ENCODE measurements at regions of chr16 and their contacts with region 1.

Region 1: GRCh38 chr16:2339521-2340484 is 725 bp downstream of the ABCA3 start:
- DNase-seq: no peak
- H3K4me3 ChIP-seq: peak overlapping the region; percentile 47
- CTCF ChIP-seq: no peak

Region 2: DNA sequence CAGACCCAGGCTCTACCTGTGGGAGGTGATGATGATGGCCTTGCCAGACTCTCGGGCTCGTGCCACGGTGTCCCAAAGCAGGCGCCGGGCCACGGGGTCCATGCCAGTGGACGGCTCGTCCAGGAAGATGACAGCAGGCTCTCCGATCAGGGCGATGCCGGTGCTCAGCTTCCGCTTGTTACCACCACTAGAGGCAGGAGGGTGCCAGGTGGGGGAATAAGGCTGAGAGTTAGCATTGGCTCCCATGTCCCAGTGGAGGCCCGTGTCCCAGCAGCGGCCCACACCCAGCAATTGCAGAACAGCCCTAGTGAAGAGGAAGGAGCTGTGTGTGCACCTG is 61.6 kb before region 1 on chr16:
- in situ Hi-C with region 1: loop called (anchors 10 kb)
- DNase-seq: no peak
- H3K4me3 ChIP-seq: no peak overlapping the region
- CTCF ChIP-seq: no peak

Measured in astrocyte of the cerebellum (primary cell).